ENCODE measurements at regions of chr12 and their contacts with region 1.

Region 1: GRCh38 chr12:59113831-59114615 is 193.7 kb upstream of the LRIG3 start:
- DNase-seq: peak; percentile 62
- H3K4me3 Mint-ChIP-seq: no peak overlapping the region
- H3K27ac Mint-ChIP-seq: no peak overlapping the region
- H3K4me1 Mint-ChIP-seq: no peaks in the 10 kb centered on the region
- H3K27me3 Mint-ChIP-seq: no peaks in the 10 kb centered on the region

Region 2: DNA sequence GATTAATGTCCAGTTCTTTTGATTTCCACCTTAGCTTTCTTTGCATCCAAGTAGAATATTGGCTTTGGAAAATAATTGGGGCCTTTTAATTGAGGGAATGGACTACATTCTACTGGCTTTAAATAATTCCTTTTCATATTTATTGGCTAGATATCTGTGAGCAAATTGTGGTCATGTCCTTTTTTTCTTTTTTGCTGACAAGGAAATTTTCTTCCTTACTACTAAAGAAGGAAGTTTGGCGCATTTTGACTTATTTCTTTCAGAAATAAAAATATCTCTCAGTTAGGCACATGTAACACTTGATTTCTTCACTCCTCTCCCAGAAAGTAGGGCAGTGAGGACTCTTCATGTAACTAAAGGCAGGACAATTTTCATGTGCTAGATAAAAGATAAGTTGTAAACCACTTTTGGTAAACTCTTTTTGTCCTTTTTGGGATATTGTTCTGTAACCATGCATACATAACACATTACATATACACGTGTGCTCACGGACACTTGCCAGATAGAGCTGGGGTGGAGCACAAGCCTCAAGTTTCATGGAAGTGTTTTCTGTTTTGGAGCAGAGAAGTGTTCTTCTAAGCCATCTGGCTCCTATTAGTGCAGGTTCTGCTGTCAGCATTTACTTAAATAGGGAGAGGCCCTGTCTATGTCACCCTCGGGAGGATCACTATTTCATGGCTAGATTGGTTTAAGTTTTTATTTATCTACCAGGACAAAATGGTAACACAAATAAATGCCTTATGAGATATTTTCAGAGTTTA is 108.6 kb before region 1 on chr12:
- CTCF ChIA-PET with region 1: no interaction called
- POLR2A ChIA-PET with region 1: no interaction called
- DNase-seq: no peak
- H3K4me3 Mint-ChIP-seq: no peak overlapping the region
- H3K27ac Mint-ChIP-seq: no peak overlapping the region
- H3K4me1 Mint-ChIP-seq: no peaks in the 10 kb centered on the region
- H3K27me3 Mint-ChIP-seq: no peaks in the 10 kb centered on the region

Region 3: GRCh38 chr12:59149997-59150642 is 36.1 kb after region 1 on chr12:
- CTCF ChIA-PET with region 1: interaction called, 20 read pairs
- POLR2A ChIA-PET with region 1: no interaction called
- DNase-seq: no peak
- H3K4me3 Mint-ChIP-seq: no peak overlapping the region
- H3K27ac Mint-ChIP-seq: no peak overlapping the region
- H3K4me1 Mint-ChIP-seq: no peaks in the 10 kb centered on the region
- H3K27me3 Mint-ChIP-seq: no peaks in the 10 kb centered on the region